OCI-LY7 (cell line): ENCODE measurements at regions of chr2 and their contacts with region 1.

Region 1: DNA sequence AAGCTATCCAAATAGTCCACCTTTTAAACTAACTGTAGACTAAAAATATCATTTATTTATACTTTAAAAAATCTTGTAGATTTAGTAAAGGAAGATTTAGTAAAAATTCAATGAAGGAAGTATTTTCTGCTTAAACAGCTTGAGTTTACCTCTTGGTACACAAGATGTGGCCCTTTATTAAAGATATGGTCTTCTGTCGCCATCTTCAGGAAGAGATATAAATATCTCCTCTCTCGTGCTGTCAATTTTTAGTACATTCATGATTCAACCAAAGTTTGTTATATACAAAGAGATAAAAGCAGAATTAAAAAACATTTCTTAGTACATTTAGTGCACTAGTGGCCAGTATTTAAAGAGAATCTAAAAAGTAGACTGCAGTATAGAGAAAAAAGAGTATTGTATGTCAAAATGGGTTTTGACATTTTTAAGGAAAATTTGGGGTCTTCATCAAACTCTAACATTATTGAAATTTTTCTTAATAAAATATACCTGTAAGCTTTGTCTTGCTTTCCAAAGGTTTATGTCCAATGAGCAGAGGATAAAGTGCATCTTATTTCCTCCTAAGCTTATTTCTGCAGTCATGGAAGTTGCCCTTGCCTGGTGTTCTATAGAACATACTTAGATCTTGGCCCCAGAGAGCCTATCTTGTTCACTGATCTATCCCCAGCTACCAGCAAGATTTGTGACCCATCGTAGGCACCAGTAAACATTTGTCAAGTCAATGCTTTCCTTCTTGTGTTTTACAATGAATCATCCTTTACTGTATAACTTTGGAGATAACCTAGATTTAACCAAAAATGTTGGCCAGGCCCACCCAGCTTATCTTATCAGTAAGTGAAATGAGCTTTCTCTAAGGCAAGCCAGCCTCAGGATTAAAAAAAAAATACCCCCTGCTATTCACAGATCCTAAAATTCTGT is 18.5 kb upstream of the EML6 start:
- DNase-seq: peak; percentile 81
- H3K4me3 ChIP-seq: no peak overlapping the region
- H3K27ac ChIP-seq: no peak overlapping the region
- H3K4me1 ChIP-seq: peaks cover 18% of the 10 kb centered on the region
- CTCF ChIP-seq: peak; percentile 97

Region 2: GRCh38 chr2:53422979-53423378 is 1282.0 kb before region 1 on chr2:
- CTCF ChIA-PET with region 1: no interaction called
- POLR2A ChIA-PET with region 1: no interaction called
- intact Hi-C with region 1: loop called (anchors 2 kb)
- DNase-seq: peak; percentile 63
- H3K4me3 ChIP-seq: no peak overlapping the region
- H3K27ac ChIP-seq: no peak overlapping the region
- H3K4me1 ChIP-seq: no peaks in the 10 kb centered on the region
- CTCF ChIP-seq: peak; percentile 81

Region 3: DNA sequence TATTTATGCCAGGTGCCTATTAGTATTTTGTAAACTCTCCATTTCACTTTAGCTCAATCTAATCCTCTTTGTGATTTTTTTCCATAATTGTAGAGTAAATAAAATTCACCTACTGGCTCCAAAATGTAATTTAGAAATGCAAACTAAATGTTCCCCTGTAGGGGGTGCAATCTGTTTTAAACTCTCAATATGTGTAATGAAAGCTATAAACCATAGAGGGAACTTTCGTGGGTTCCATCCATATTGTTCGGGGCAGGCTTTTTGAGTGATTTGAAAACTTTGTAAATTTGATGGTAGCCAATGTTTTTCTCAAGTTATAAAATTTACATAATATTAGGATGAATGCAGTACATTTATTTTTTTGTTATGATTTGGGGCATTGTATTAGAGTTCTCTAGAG is 498.4 kb before region 1 on chr2:
- CTCF ChIA-PET with region 1: no interaction called
- POLR2A ChIA-PET with region 1: no interaction called
- intact Hi-C with region 1: loop called (anchors 10 kb)
- DNase-seq: peak; percentile 49
- H3K4me3 ChIP-seq: no peak overlapping the region
- H3K27ac ChIP-seq: no peak overlapping the region
- H3K4me1 ChIP-seq: no peaks in the 10 kb centered on the region
- CTCF ChIP-seq: peak; percentile 92

Region 4: GRCh38 chr2:54522624-54523281 is 182.2 kb before region 1 on chr2:
- CTCF ChIA-PET with region 1: interaction called, 8 read pairs
- POLR2A ChIA-PET with region 1: interaction called, 9 read pairs
- intact Hi-C with region 1: loop called (anchors 1 kb)
- DNase-seq: peak; percentile 89
- H3K4me3 ChIP-seq: no peak overlapping the region
- H3K27ac ChIP-seq: no peak overlapping the region
- H3K4me1 ChIP-seq: peaks cover 15% of the 10 kb centered on the region
- CTCF ChIP-seq: peak; percentile 93

Region 5: GRCh38 chr2:54665436-54665856 is 39.5 kb before region 1 on chr2:
- CTCF ChIA-PET with region 1: interaction called, 10 read pairs
- POLR2A ChIA-PET with region 1: interaction called, 8 read pairs
- intact Hi-C with region 1: loop called (anchors 2 kb)
- DNase-seq: peak; percentile 74
- H3K4me3 ChIP-seq: no peak overlapping the region
- H3K27ac ChIP-seq: no peak overlapping the region
- H3K4me1 ChIP-seq: no peaks in the 10 kb centered on the region
- CTCF ChIP-seq: peak; percentile 91